BJ (cell line): ENCODE measurements at regions of chr13 and their contacts with region 1.

Region 1: GRCh38 chr13:40069173-40070044 is 413.9 kb downstream of the COG6 start:
- DNase-seq: no peak
- H3K4me3 ChIP-seq: no peak overlapping the region
- H3K27me3 ChIP-seq: no peaks in the 10 kb centered on the region
- CTCF ChIP-seq: peak; percentile 85

Region 2: GRCh38 chr13:39855236-39855635 is 214.2 kb before region 1 on chr13:
- CTCF ChIA-PET with region 1: no interaction called
- POLR2A ChIA-PET with region 1: no interaction called
- DNase-seq: no peak
- H3K4me3 ChIP-seq: no peak overlapping the region
- H3K27me3 ChIP-seq: 0 out of 2 replicates have a peak, but pooled peaks cover 1% of the 10 kb centered on the region
- CTCF ChIP-seq: no peak

Region 3: DNA sequence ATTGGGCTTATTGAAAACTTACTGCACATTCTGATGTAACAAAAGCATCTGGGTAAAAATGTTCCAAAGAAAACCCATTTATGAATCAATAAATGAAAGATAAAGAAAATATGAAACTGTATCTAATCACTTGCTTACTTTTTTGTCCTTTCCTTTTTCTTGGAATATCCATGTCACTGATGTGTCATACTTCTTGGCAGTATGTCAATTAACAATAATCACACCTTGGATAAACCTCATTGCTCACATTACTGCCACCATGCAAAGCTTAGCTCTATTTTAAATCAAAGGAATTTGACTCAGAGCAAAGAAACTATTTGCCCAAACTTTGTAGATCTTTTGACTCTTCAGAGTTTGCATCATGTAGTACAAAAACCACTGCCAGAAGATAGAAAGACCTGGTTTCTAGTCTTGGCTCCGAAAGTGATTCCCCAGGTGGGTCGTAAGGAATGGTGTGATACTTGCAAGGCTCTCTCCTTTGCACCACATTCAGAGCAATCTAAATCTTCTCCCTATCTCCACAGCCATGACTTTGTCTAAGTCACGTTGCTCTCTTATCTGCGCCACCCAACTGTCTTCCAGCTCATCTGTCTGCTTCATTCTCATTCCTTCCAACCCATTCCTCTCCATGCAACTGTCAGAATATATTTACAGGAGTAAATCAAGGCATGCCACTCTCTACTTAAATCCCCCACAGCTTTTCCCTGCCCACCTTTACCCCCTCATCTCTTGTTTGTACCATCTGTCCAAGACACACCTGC is 102.0 kb before region 1 on chr13:
- CTCF ChIA-PET with region 1: no interaction called
- POLR2A ChIA-PET with region 1: no interaction called
- DNase-seq: no peak
- H3K4me3 ChIP-seq: no peak overlapping the region
- H3K27me3 ChIP-seq: no peaks in the 10 kb centered on the region
- CTCF ChIP-seq: no peak

Region 4: DNA sequence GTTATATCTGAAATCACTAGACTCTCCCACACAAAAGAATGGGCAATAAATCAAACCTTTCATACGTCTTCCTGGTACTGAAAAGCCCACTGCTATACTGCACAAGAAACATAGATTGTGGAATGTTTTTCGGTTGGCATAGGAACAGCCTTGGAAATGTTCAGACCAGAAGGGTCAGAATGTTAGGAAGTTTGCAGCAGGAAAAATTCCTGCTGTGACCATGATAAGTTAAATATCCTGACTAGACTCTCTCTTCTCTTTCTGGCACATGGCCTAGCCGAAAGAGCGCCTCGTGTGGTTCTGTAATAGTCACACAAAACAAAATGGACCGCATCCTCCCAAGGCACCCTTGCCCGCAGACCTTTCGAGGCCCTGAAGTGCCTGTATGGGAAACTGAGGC is 13.2 kb after region 1 on chr13:
- CTCF ChIA-PET with region 1: interaction called, 22 read pairs
- POLR2A ChIA-PET with region 1: no interaction called
- DNase-seq: no peak
- H3K4me3 ChIP-seq: no peak overlapping the region
- H3K27me3 ChIP-seq: no peaks in the 10 kb centered on the region; the same call in 1 of the 2 replicates
- CTCF ChIP-seq: no peak

Region 5: GRCh38 chr13:40137400-40137799 is 68.0 kb after region 1 on chr13:
- CTCF ChIA-PET with region 1: no interaction called
- POLR2A ChIA-PET with region 1: no interaction called
- DNase-seq: no peak
- H3K4me3 ChIP-seq: no peak overlapping the region
- H3K27me3 ChIP-seq: no peaks in the 10 kb centered on the region
- CTCF ChIP-seq: no peak

Region 6: GRCh38 chr13:40668335-40668734 is 598.9 kb after region 1 on chr13:
- CTCF ChIA-PET with region 1: interaction called, 10 read pairs
- POLR2A ChIA-PET with region 1: no interaction called
- DNase-seq: no peak
- H3K4me3 ChIP-seq: no peak overlapping the region
- H3K27me3 ChIP-seq: no peaks in the 10 kb centered on the region
- CTCF ChIP-seq: peak; percentile 51; the same call in 1 of the 2 replicates

Region 7: DNA sequence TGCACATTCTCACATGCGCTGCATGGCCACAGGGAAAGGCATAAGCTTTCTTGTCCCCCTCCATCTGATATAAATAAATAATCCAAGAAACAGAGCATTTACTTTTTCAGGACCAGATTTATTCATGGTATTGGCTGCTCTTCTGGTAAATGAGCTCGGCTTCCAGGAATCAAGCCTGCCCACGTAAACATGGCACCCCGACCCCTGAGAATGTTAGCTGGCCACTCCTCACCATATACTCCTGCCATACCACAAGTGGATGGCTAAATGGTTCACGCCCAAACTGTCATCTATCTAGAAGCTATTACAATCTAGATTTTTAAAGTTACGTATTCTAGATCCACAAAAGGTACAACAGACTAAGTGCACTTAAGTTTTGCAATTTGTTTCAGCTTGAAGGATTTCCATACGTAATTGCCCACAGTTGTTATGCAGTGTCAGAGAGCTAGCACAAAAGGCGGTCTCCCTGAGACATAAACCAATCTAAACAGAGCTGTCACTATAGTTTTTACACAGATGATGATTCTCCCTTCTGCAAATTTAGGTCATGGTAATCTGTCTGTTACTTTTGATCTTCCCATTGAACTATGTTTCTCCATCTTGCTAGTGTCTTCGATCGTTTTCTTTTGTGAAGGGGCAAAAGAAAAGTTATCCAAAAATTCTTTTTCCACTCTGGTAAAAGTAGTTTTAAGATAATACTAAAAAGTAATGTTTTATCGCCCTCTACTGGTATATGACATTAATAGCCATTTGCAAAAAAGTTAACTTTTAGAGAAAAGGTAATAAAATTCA is 613.2 kb after region 1 on chr13:
- CTCF ChIA-PET with region 1: interaction called, 105 read pairs
- POLR2A ChIA-PET with region 1: no interaction called
- DNase-seq: no peak
- H3K4me3 ChIP-seq: no peak overlapping the region
- H3K27me3 ChIP-seq: no peaks in the 10 kb centered on the region
- CTCF ChIP-seq: peak; percentile 39; the same call in 1 of the 2 replicates